ENCODE measurements at regions of chr5 and their contacts with region 1.

Region 1: DNA sequence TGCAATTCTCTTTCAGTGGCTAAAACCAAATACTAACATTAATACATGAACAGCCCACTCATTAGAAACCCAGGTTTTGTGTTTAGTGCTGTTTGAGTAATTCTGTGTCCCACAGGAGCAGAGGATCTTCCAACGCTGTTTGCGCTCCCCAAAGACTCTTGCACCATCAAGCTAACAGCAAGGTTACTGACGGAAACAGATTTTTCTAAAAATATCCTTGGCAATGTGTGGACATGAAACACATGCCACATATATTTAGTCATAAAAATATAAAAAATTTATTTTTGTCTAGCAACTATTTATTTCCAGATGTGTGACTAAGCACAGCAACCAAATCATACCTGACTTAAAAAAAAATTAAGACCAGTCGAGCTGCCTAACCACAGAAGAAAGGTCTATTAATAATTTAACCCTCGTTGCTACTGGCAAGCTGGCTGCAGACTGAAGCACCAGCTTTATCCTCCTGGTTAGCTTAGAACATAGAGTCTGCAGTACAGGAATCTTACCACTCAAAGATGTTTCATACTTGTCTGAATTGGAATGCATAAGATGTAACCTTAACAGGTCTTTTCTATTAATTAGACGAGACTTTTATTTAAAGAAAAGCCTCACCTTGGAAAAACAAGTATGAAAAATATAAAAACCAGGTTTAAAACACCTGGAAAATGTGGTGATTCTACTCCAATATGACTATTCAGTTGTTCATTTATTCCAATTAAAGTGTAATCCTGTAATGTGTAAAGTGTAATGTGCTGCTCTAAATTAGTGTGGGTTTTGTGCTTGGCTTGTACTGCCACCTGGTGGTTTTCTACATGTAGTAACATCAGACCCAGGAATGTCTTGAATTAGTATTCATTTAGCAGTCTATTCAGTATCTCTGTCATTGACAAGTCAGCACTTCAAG is 272.5 kb downstream of the EPB41L4A start:
- DNase-seq: no peak
- ATAC-seq: peak; percentile 96
- H3K4me3 Mint-ChIP-seq: no peak overlapping the region
- H3K27ac Mint-ChIP-seq: no peak overlapping the region
- H3K4me1 Mint-ChIP-seq: no peaks in the 10 kb centered on the region
- H3K27me3 Mint-ChIP-seq: peaks cover 1% of the 10 kb centered on the region
- CTCF ChIP-seq: peak; percentile 96

Region 2: DNA sequence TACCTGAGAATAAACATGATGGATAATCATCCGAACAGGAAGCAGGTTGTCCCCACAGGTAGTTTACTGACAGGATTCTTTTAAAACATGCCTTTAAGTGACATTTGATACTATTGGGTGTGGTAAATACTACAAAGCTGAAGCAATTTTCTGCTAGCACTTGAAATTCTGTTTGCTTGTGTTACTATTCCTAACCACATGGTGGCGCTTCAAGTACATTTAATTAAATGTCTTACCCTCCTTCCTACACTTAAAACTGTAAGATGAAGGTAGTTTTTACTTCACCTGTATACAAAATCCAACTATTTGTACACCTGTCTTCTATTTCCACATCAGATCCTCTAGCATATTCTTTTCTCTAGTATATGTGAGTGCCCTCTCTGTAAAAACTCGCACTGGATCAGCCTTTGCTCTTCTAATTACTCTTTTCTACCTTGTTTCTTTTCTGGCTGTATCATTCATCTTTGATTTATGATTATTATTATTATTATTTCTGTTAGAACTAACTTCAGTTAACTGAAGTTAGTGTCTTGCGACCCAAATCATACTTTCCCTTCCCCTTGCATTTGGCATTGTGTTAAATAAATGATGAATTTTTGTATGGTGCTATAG is 1389.4 kb before region 1 on chr5:
- CTCF ChIA-PET with region 1: interaction called, 3 read pairs
- POLR2A ChIA-PET with region 1: no interaction called
- intact Hi-C with region 1: loop called (anchors 5 kb)
- DNase-seq: no peak
- ATAC-seq: no peak
- H3K4me3 Mint-ChIP-seq: no peak overlapping the region
- H3K27ac Mint-ChIP-seq: no peak overlapping the region
- H3K4me1 Mint-ChIP-seq: peaks cover 9% of the 10 kb centered on the region
- H3K27me3 Mint-ChIP-seq: no peaks in the 10 kb centered on the region
- CTCF ChIP-seq: peak; percentile 65

Region 3: DNA sequence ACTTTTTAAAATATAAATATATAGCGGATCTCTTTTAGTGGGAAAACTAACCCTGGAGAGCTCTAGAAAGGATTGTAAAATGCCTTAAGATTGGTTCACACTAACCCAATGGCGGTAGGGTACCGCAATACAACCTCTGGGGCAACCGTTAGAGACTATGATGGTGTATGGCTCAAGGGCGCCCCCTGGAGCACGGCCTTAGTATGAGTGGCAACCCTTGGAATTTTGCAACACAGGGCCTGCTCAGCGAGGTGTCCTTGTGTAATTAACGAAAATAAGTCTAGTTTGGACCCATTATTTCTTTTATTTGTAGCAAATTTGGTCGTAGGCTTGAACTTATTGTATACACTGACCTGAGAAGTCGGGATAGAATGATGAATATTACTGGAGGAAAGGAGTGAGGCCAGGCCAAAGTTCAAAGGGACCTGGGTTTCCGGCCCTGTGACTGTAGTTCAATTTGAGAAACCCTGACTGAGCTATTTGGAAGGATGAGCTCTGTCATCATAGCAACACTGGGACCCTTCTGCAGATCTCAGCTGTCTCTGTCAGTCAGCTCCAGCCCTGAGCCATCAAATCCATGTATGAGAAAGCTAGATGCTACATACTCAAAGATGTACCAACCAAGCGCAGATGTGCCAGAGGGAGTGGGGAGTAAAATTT is 867.6 kb before region 1 on chr5:
- CTCF ChIA-PET with region 1: no interaction called
- POLR2A ChIA-PET with region 1: no interaction called
- intact Hi-C with region 1: loop called (anchors 2 kb)
- DNase-seq: peak; percentile 39
- ATAC-seq: peak; percentile 76
- H3K4me3 Mint-ChIP-seq: no peak overlapping the region
- H3K27ac Mint-ChIP-seq: no peak overlapping the region
- H3K4me1 Mint-ChIP-seq: no peaks in the 10 kb centered on the region
- H3K27me3 Mint-ChIP-seq: no peaks in the 10 kb centered on the region
- CTCF ChIP-seq: no peak

Region 4: GRCh38 chr5:111550279-111551020 is 596.1 kb before region 1 on chr5:
- CTCF ChIA-PET with region 1: interaction called, 38 read pairs
- POLR2A ChIA-PET with region 1: no interaction called
- intact Hi-C with region 1: loop called (anchors 1 kb)
- DNase-seq: peak; percentile 27
- ATAC-seq: peak; percentile 76
- H3K4me3 Mint-ChIP-seq: no peak overlapping the region
- H3K27ac Mint-ChIP-seq: no peak overlapping the region
- H3K4me1 Mint-ChIP-seq: peaks cover 4% of the 10 kb centered on the region
- H3K27me3 Mint-ChIP-seq: peaks cover 5% of the 10 kb centered on the region
- CTCF ChIP-seq: peak; percentile 25

Region 5: GRCh38 chr5:111834926-111835598 is 311.5 kb before region 1 on chr5:
- CTCF ChIA-PET with region 1: no interaction called
- POLR2A ChIA-PET with region 1: no interaction called
- intact Hi-C with region 1: loop called (anchors 1 kb)
- DNase-seq: no peak
- ATAC-seq: no peak
- H3K4me3 Mint-ChIP-seq: no peak overlapping the region
- H3K27ac Mint-ChIP-seq: no peak overlapping the region
- H3K4me1 Mint-ChIP-seq: no peaks in the 10 kb centered on the region
- H3K27me3 Mint-ChIP-seq: no peaks in the 10 kb centered on the region
- CTCF ChIP-seq: no peak

Region 6: GRCh38 chr5:112346411-112347044 is 200.0 kb after region 1 on chr5:
- CTCF ChIA-PET with region 1: no interaction called
- POLR2A ChIA-PET with region 1: no interaction called
- intact Hi-C with region 1: no loop called
- DNase-seq: no peak
- ATAC-seq: no peak
- H3K4me3 Mint-ChIP-seq: no peak overlapping the region
- H3K27ac Mint-ChIP-seq: no peak overlapping the region
- H3K4me1 Mint-ChIP-seq: no peaks in the 10 kb centered on the region
- H3K27me3 Mint-ChIP-seq: no peaks in the 10 kb centered on the region
- CTCF ChIP-seq: no peak